Breast epithelium (tissue), 4 donors: ENCODE measurements at regions of chr5 and their contacts with region 1.

Region 1: DNA sequence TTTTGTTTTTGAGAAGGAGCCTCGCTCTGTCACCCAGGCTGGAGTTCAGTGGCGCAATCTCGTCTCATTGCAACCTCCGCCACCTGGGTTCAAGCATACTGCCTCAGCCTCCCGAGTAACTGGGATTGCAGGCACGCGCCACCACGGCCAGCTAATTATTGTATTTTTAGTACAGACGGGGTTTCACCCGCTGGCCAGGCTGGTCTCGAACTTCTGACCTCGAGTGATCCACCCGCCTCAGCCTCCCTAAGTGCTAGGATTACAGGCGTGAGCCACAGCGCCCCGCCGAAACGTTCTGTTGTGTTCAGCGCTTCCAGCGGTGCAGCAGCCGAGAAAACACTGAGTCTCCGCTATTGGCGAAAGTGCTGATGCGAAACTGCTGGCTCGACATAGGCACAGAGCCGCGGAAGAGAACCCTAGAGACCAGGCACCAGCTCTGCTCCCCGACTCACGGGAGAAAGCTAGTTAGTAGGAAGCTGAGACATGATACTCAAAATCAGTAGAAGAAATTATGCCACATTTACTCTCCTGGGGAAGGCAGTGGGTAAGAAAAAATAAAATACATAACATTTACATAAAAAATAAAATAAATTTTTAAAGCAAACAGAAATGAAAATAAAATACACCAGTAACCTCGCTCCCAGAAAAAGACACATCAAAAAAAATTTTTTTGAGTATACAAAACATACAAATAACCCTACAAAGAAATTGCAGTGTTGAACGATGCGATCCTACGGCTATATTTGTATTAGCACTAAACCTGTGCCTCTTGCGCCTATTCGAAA is 31.6 kb downstream of the ANXA2R start:
- DNase-seq: peak in 1 of 2 donors; percentile 67
- H3K4me3 ChIP-seq: peak overlapping the region; percentile 51 to 62 (median 57)
- H3K27ac ChIP-seq: peak overlapping the region; percentile 80 to 91
- H3K4me1 ChIP-seq: no peaks in the 10 kb centered on the region
- H3K27me3 ChIP-seq: peaks cover 0 to 16% of the 10 kb centered on the region in 2 donors
- CTCF ChIP-seq: no peak
- POLR2A ChIP-seq: peak; percentile 51

Region 2: DNA sequence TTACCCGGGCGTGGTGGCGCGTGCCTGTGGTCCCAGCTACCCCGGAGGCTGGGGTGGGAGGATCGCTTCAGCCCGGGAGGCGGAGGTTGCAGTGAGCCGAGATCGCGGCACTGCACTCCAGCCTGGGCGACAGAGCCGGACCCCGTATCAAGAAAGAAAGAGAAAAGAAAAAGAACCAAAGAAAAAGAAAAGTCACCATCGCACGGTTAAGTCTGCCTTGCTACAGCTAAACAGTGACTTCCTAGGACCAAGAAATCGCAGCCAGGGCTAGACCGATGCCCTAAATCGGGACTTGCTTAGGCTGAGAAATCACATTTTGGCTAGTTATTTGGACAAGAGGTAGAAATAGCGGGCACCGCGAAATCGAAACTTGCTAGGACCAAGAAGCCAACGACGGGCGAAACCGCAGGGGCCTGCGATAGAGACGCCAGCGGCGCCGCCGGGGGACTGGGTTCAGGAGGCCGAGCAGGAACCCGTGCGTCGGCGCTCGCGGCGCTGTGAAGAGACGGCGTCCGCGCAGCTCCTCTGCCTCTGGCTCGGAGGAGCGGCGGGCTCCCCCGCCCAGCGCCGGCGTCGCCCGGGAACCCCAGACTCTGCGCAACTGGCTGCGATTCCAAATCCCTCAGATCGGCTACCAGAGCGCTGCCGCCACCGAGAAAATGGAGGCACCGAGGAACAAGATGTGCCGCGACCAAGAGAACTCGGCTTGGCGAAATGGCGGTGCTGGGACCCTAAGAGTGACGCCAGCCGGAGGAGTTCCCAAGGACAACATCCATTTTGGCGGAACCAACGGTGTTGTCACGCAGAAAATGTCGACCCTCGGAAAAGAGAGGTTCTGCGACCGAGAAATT is 57.6 kb after region 1 on chr5:
- intact Hi-C with region 1: loop called (anchors 2 kb)
- DNase-seq: peak; percentile 66 to 77
- H3K4me3 ChIP-seq: peak overlapping the region; percentile 68 to 89 (median 77)
- H3K27ac ChIP-seq: peak overlapping the region; percentile 99 to 100
- H3K4me1 ChIP-seq: peaks cover 0 to 7% of the 10 kb centered on the region in 2 donors
- H3K27me3 ChIP-seq: no peaks in the 10 kb centered on the region
- CTCF ChIP-seq: no peak
- POLR2A ChIP-seq: no peak